A549 (cell line): ENCODE measurements at regions of chr12 and their contacts with region 1.

Region 1: DNA sequence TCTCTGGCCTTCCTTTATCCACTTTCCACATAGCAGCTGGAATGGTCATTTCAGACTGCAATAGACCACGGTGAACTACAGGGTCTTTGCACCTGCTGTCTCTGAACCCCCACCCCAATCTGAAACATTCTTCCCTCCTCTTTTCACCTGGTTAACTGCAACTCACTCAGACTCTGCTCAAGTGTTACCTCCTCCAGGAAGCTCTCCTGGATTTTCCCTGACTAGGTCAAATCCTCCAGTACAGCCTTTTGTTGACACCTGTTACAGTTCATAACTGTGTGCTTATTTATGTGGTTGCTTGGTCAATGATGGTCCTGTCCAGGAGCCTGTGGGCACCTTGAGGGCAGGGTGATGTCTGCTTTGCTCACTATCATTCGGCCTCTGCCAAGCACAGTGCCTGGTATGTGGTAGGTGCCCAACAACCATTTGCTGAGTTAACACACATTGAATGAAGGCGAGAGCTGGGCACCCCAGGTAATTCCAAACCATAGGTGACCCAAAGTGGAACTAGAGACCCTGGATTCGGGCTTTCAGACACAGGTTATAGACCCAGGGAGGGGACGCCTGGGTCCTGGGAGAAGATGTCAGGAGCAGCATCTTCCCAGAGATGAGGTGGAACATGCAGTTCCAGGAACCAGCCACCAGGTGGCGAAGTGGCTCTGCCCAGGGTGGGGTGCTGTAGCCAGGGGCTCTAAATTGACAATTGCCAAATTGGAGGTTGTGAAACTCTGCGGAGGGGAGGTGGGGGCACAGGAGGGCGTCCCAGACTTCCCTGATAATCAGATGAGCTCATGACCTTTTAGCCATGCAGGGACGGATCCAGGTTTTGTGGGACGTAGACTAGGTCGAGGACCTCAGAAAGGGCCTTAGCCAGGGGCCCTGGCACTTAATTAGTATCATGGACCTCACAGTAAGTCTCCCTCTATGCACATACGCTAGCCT is 28.1 kb downstream of the TRPV4 start:
- DNase-seq: peak; percentile 62 to 82
- ATAC-seq: peak; percentile 77 to 93
- H3K4me3 ChIP-seq: no peak overlapping the region
- H3K27ac ChIP-seq: no peak overlapping the region
- H3K4me1 ChIP-seq: no peaks in the 10 kb centered on the region
- CTCF ChIP-seq: peak; percentile 94
- EP300 ChIP-seq: no peak
- POLR2A ChIP-seq: no peak
- RAD21 ChIP-seq: peak; percentile 91 to 94

Region 2: GRCh38 chr12:109818905-109819500 is 13.9 kb after region 1 on chr12:
- CTCF ChIA-PET with region 1: interaction called, 85 read pairs
- POLR2A ChIA-PET with region 1: no interaction called
- DNase-seq: peak in 1 of 2 experiments; percentile 63
- ATAC-seq: peak; percentile 35 to 50; a peak in 5 of 6 replicates
- H3K4me3 ChIP-seq: no peak overlapping the region
- H3K27ac ChIP-seq: peak overlapping the region in 1 of 2 experiments; percentile 37; a peak in 2 of 6 replicates
- H3K4me1 ChIP-seq: peaks cover 28% of the 10 kb centered on the region
- CTCF ChIP-seq: no peak
- EP300 ChIP-seq: no peak
- POLR2A ChIP-seq: no peak
- RAD21 ChIP-seq: no peak

Region 3: GRCh38 chr12:109833307-109834189 is 28.5 kb after region 1 on chr12 and contains the start of gene TRPV4:
- CTCF ChIA-PET with region 1: interaction called, 56 read pairs
- POLR2A ChIA-PET with region 1: no interaction called
- DNase-seq: no peak
- ATAC-seq: no peak
- H3K4me3 ChIP-seq: no peak within 1 kb of the TSS
- H3K27ac ChIP-seq: peak within 1 kb of the TSS in 1 of 2 experiments; percentile 59; a peak in 2 of 6 replicates
- H3K4me1 ChIP-seq: peaks cover 31% of the 10 kb centered on the region
- CTCF ChIP-seq: no peak
- EP300 ChIP-seq: no peak
- POLR2A ChIP-seq: no peak
- RAD21 ChIP-seq: no peak
- polyA plus RNA-seq, gene TRPV4: 0.37 and 0.52 TPM in 2 replicates

Region 4: GRCh38 chr12:109863847-109864712 is 59.0 kb after region 1 on chr12:
- CTCF ChIA-PET with region 1: interaction called, 12 read pairs
- POLR2A ChIA-PET with region 1: no interaction called
- DNase-seq: peak in 1 of 2 experiments; percentile 66
- ATAC-seq: peak; percentile 62 to 80; a peak in 4 of 6 replicates
- H3K4me3 ChIP-seq: no peak overlapping the region
- H3K27ac ChIP-seq: peak overlapping the region; percentile 23 to 69; a peak in 4 of 6 replicates
- H3K4me1 ChIP-seq: peaks cover 19% of the 10 kb centered on the region
- CTCF ChIP-seq: no peak
- EP300 ChIP-seq: no peak
- POLR2A ChIP-seq: no peak
- RAD21 ChIP-seq: no peak

Region 5: GRCh38 chr12:109927622-109928021 is 122.5 kb after region 1 on chr12:
- CTCF ChIA-PET with region 1: interaction called, 13 read pairs
- POLR2A ChIA-PET with region 1: no interaction called
- DNase-seq: peak; percentile 64 to 78
- ATAC-seq: peak; percentile 91 to 92
- H3K4me3 ChIP-seq: no peak overlapping the region
- H3K27ac ChIP-seq: no peak overlapping the region
- H3K4me1 ChIP-seq: no peaks in the 10 kb centered on the region
- CTCF ChIP-seq: peak; percentile 72
- EP300 ChIP-seq: no peak
- POLR2A ChIP-seq: no peak
- RAD21 ChIP-seq: peak; percentile 51 to 66